HAP-1 (cell line): ENCODE measurements at regions of chr11 and their contacts with region 1.

Region 1: DNA sequence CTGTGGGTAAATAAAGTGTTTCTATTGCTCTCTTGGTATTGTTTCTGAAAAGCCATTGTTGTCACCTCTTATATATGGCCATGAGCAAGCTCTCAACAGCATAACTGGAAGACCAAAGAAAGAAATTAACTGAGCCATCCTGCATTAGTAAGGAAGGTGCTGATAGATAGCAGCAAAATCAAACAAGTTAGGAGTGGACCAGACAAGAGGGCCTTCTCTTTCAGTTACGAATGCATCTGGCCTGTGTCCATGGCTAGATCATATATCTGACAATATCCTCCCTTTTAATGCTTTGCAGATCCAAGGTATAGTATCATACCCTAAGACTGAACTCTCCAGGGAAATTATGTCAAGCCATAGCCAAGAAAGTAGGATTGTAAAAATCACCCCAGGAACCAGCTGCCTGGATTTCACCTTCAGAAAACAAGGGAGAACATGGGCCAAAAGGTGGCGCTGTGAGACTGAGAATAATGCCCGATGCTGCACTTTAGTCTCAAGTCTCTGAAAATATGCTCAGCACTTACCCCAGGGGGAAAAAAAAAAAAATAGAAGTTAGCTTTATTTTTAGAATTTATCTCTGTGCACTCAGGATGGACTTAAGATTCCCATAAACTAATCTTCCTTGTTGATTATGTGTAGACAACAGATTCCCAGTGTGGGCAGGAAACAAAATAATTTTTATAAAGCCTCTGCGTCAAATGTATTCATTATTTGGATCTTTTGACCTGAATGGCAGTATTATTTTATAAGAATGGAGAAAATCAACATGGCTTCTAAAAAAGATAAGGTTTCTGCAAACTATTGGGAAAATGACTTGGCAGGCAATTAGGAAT is 415.1 kb downstream of the ETS1 start:
- DNase-seq: peak; percentile 31 to 77
- H3K4me3 ChIP-seq: no peak overlapping the region
- H3K4me1 ChIP-seq: no peaks in the 10 kb centered on the region
- H3K27me3 ChIP-seq: no peaks in the 10 kb centered on the region

Region 2: DNA sequence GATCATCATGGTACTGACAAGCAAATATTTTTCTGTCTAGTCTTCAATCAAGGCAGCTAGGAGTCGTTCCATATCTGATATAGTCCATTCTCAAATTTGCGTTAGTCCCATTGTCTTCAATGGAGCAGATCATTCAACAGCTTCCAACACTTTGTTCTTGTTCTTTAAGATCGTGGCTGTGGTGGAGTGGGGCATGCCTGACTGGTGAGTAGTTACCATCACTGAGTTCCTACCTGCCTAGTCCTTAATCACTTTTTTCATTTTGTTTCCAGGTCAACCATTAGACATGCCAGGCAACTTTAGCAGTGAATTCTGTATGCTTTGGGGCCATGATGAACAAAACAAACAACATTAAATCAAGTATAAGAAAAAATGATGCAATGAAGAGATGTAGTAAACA is 478.6 kb before region 1 on chr11:
- in situ Hi-C with region 1: no loop called
- DNase-seq: no peak
- H3K4me3 ChIP-seq: no peak overlapping the region
- H3K4me1 ChIP-seq: no peaks in the 10 kb centered on the region
- H3K27me3 ChIP-seq: no peaks in the 10 kb centered on the region

Region 3: GRCh38 chr11:128311742-128312719 is 139.8 kb after region 1 on chr11:
- in situ Hi-C with region 1: no loop called
- DNase-seq: no peak
- H3K4me3 ChIP-seq: no peak overlapping the region
- H3K4me1 ChIP-seq: no peaks in the 10 kb centered on the region
- H3K27me3 ChIP-seq: peaks cover 8% of the 10 kb centered on the region; the same call in 1 of the 2 replicates

Region 4: GRCh38 chr11:128630367-128631230 is 458.3 kb after region 1 on chr11:
- in situ Hi-C with region 1: loop called (anchors 10 kb)
- DNase-seq: peak; percentile 60 to 90
- H3K4me3 ChIP-seq: no peak overlapping the region
- H3K4me1 ChIP-seq: no peaks in the 10 kb centered on the region
- H3K27me3 ChIP-seq: no peaks in the 10 kb centered on the region

Region 5: GRCh38 chr11:128831174-128832120 is 659.2 kb after region 1 on chr11:
- in situ Hi-C with region 1: loop called (anchors 10 kb)
- DNase-seq: peak; percentile 76 to 83
- H3K4me3 ChIP-seq: no peak overlapping the region
- H3K4me1 ChIP-seq: no peaks in the 10 kb centered on the region
- H3K27me3 ChIP-seq: no peaks in the 10 kb centered on the region